GM12878 (cell line): ENCODE measurements at regions of chr1 and their contacts with region 1.

Region 1: GRCh38 chr1:206834711-206835110 is 30.7 kb upstream of the IL20 start:
- DNase-seq: no peak
- ATAC-seq: peak; percentile 41; the same call in 2 of the 3 replicates
- H3K4me3 ChIP-seq: no peak overlapping the region
- H3K27ac ChIP-seq: no peak overlapping the region
- H3K4me1 ChIP-seq: peaks cover 32% of the 10 kb centered on the region
- H3K27me3 ChIP-seq: no peaks in the 10 kb centered on the region; a peak in 1 of 4 replicates
- CTCF ChIP-seq: no peak
- EP300 ChIP-seq: no peak
- POLR2A ChIP-seq: no peak
- RAD21 ChIP-seq: no peak

Region 2: GRCh38 chr1:206814716-206815341 is 19.9 kb before region 1 on chr1:
- CTCF ChIA-PET with region 1: interaction called, 21 read pairs
- POLR2A ChIA-PET with region 1: interaction called, 10 read pairs
- RAD21 ChIA-PET with region 1: interaction called, 6 read pairs
- SMC1A ChIA-PET with region 1: interaction called, 20 read pairs
- in situ Hi-C with region 1: no loop called
- intact Hi-C with region 1: no loop called
- DNase-seq: no peak
- ATAC-seq: peak; percentile 42
- H3K4me3 ChIP-seq: no peak overlapping the region
- H3K27ac ChIP-seq: no peak overlapping the region; the same call in 1 of the 2 replicates
- H3K4me1 ChIP-seq: peaks cover 27% of the 10 kb centered on the region
- H3K27me3 ChIP-seq: no peaks in the 10 kb centered on the region
- CTCF ChIP-seq: no peak
- EP300 ChIP-seq: no peak
- POLR2A ChIP-seq: no peak
- RAD21 ChIP-seq: no peak

Region 3: GRCh38 chr1:206846487-206846886 is 11.8 kb after region 1 on chr1:
- CTCF ChIA-PET with region 1: interaction called, 6 read pairs
- POLR2A ChIA-PET with region 1: no interaction called
- RAD21 ChIA-PET with region 1: no interaction called
- SMC1A ChIA-PET with region 1: interaction called, 18 read pairs
- in situ Hi-C with region 1: no loop called
- intact Hi-C with region 1: no loop called
- DNase-seq: no peak
- ATAC-seq: no peak
- H3K4me3 ChIP-seq: no peak overlapping the region
- H3K27ac ChIP-seq: no peak overlapping the region
- H3K4me1 ChIP-seq: no peaks in the 10 kb centered on the region
- H3K27me3 ChIP-seq: no peaks in the 10 kb centered on the region
- CTCF ChIP-seq: no peak
- EP300 ChIP-seq: no peak
- POLR2A ChIP-seq: no peak
- RAD21 ChIP-seq: no peak

Region 4: DNA sequence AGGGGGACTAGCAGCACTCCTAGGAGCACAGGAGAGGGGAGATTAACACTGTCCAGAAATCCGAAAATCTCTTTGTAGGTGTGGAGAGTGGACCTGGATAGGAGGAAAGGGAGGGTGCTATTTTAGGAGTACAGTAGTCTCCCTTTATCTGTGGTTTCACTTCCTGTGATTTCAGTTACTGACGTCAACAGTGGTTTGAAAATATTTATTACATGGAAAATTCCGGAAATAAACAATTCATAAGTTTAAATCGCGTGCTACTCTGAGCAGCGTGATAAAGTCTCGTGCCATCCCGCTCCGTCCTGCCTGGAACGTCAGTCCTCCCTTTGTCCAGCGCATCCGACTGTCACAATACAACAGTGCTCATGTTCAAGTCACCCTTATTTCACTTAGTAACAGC is 56.0 kb after region 1 on chr1:
- CTCF ChIA-PET with region 1: no interaction called
- POLR2A ChIA-PET with region 1: no interaction called
- RAD21 ChIA-PET with region 1: no interaction called
- SMC1A ChIA-PET with region 1: no interaction called
- in situ Hi-C with region 1: no loop called
- intact Hi-C with region 1: no loop called
- DNase-seq: no peak
- ATAC-seq: no peak
- H3K4me3 ChIP-seq: no peak overlapping the region
- H3K27ac ChIP-seq: no peak overlapping the region
- H3K4me1 ChIP-seq: no peaks in the 10 kb centered on the region
- H3K27me3 ChIP-seq: no peaks in the 10 kb centered on the region
- CTCF ChIP-seq: no peak
- EP300 ChIP-seq: no peak
- POLR2A ChIP-seq: no peak
- RAD21 ChIP-seq: no peak

Region 5: DNA sequence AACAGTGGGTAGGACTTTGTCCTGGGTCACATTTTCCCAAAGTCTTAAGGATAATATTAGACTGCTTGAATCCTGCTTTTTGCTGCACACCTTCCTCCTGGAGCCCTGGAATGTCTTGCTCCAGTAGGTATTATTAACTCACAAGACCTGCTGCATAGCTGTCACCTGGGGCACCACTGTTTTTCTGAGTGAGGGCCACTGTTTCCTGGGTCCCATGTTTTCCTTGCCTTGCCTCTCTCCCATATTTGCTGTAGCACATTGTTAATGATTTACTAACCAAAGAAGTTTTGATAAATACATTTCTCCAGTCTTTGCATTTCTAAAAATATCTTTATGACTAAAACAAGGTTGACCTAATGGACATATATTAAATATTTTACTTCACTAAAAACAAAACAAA is 158.1 kb after region 1 on chr1:
- CTCF ChIA-PET with region 1: no interaction called
- POLR2A ChIA-PET with region 1: no interaction called
- RAD21 ChIA-PET with region 1: no interaction called
- SMC1A ChIA-PET with region 1: no interaction called
- in situ Hi-C with region 1: no loop called
- intact Hi-C with region 1: no loop called
- DNase-seq: no peak
- ATAC-seq: no peak
- H3K4me3 ChIP-seq: no peak overlapping the region
- H3K27ac ChIP-seq: no peak overlapping the region
- H3K4me1 ChIP-seq: no peaks in the 10 kb centered on the region
- H3K27me3 ChIP-seq: peaks cover 0 to 5% of the 10 kb centered on the region in 2 experiments; a peak in 2 of 4 replicates
- CTCF ChIP-seq: no peak
- EP300 ChIP-seq: no peak
- POLR2A ChIP-seq: no peak
- RAD21 ChIP-seq: no peak

Region 6: GRCh38 chr1:207040181-207040533 is 205.4 kb after region 1 on chr1:
- CTCF ChIA-PET with region 1: no interaction called
- POLR2A ChIA-PET with region 1: interaction called, 11 read pairs
- RAD21 ChIA-PET with region 1: no interaction called
- SMC1A ChIA-PET with region 1: no interaction called
- in situ Hi-C with region 1: no loop called
- intact Hi-C with region 1: no loop called
- DNase-seq: no peak
- ATAC-seq: no peak
- H3K4me3 ChIP-seq: no peak overlapping the region
- H3K27ac ChIP-seq: no peak overlapping the region
- H3K4me1 ChIP-seq: no peaks in the 10 kb centered on the region
- H3K27me3 ChIP-seq: no peaks in the 10 kb centered on the region
- CTCF ChIP-seq: no peak
- EP300 ChIP-seq: no peak
- POLR2A ChIP-seq: no peak
- RAD21 ChIP-seq: no peak